CD14-positive monocyte (primary cell): ENCODE measurements at regions of chr11 and their contacts with region 1.

Region 1: DNA sequence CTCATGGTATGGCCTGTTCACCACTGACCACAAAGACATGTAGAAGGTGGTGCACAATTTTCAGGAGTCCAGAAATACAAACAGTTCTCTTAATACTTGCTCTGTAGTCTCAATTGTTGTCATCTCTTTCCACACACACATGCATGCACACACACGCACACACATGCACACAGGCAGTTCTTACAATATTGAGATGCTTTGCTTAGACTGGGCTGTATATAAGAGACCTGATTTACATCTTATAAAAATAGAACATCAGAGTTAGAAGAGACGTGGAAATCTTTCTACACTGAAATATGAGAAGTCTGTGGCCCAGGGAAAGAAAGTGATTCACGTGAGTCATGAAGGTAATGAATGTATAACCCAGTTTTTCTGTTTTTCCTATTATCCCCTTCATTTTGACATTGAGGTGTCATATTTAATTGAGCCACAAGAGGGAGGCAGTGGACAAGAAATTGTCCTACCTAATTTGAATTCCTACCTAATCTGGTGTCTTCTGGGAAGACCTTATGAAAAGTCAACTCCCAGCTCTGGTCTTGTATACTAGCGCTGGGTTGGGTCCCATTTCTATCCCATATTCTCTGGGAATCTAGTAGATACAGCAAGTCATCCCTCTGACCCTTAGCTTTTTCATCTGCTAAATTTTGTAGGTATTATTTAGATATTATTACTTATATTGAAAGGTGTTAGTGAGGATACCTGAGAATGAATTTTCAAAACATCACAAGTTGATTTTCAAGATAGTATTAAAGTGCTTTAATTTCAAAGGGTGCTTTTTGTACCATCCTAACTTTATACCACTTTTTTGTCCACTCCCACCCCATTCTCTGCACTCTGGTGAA is 14.9 kb upstream of the MS4A4A start:
- DNase-seq: peak in 2 of 3 donors; percentile 59 to 64
- H3K4me3 ChIP-seq: no peak overlapping the region
- H3K4me3 Mint-ChIP-seq: no peak overlapping the region
- H3K27ac ChIP-seq: no peak overlapping the region
- H3K27ac Mint-ChIP-seq: peak overlapping the region in 1 of 7 donors; percentile 43
- H3K4me1 ChIP-seq: peaks cover 17 to 20% of the 10 kb centered on the region in 2 donors
- H3K4me1 Mint-ChIP-seq: peaks cover 24% of the 10 kb centered on the region
- H3K27me3 ChIP-seq: no peaks in the 10 kb centered on the region
- H3K27me3 Mint-ChIP-seq: no peaks in the 10 kb centered on the region
- CTCF ChIP-seq: peak; percentile 91

Region 2: DNA sequence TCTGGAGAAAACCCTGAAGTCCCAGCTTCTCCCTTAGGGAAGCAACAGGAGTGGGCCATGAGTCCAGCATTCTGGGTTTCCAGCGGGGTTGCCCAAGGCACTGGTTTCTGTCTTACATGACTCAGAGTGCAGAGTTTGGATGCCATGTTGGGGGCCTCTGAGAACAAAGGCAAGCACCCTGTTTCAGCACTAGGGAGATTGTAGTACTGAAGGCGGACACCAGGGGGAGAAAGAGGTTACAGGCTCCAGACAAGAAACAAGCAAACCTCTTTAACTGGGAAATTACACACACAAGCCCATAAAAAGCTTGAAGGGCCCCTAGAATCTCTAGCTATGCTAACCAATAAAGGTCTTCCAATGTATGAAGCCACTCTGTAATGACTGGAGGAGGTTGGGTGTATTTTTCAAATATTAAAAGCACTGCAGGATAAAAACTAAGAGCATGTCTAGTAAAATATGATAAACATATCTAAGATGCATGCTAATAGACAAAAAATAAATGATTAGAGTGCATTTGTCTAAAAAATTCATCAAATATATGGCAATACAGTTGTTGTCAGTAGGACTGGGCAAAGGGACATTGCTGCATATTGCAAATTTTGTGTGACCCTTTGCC is 68.5 kb after region 1 on chr11:
- intact Hi-C with region 1: loop called in 1 of 2 experiments (anchors 5 kb)
- DNase-seq: peak; percentile 74 to 87 (median 75)
- H3K4me3 ChIP-seq: no peak overlapping the region
- H3K4me3 Mint-ChIP-seq: no peak overlapping the region
- H3K27ac ChIP-seq: peak overlapping the region in 1 of 2 donors; percentile 7
- H3K27ac Mint-ChIP-seq: peak overlapping the region in 2 of 7 donors; percentile 15 to 22
- H3K4me1 ChIP-seq: peaks cover 34 to 40% of the 10 kb centered on the region in 2 donors
- H3K4me1 Mint-ChIP-seq: peaks cover 33% of the 10 kb centered on the region
- H3K27me3 ChIP-seq: no peaks in the 10 kb centered on the region
- H3K27me3 Mint-ChIP-seq: peaks cover 0 to 3% (median 0%) of the 10 kb centered on the region in 3 donors
- CTCF ChIP-seq: peak; percentile 91

Region 3: DNA sequence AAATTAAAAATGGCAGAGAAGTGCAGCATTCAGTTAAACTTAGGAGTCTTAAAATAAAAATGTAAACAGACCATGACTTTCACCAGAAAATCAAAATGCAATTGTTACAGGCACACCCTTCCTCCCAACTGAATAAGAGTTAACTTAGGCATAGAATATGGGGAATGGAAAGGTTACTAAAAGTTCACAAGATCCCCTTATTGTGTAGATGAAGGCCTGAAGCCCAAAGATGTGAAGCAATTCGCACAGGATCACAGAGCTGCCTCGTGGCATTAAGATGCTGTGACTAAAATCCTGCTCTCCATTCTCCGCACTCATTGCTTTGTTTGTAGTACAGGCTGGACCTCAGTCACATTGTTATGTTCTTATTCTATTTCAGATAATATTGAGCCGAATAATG is 167.8 kb after region 1 on chr11:
- intact Hi-C with region 1: no loop called
- DNase-seq: no peak
- H3K4me3 ChIP-seq: no peak overlapping the region
- H3K4me3 Mint-ChIP-seq: no peak overlapping the region
- H3K27ac ChIP-seq: no peak overlapping the region
- H3K27ac Mint-ChIP-seq: no peak overlapping the region
- H3K4me1 ChIP-seq: no peaks in the 10 kb centered on the region
- H3K4me1 Mint-ChIP-seq: peaks cover 13% of the 10 kb centered on the region
- H3K27me3 ChIP-seq: peaks cover 0 to 2% of the 10 kb centered on the region in 2 donors
- H3K27me3 Mint-ChIP-seq: peaks cover 0 to 4% (median 0%) of the 10 kb centered on the region in 3 donors
- CTCF ChIP-seq: no peak

Region 4: GRCh38 chr11:60485986-60486385 is 220.4 kb after region 1 on chr11:
- intact Hi-C with region 1: loop called (anchors 10 kb)
- DNase-seq: peak; percentile 32 to 65 (median 55)
- H3K4me3 ChIP-seq: no peak overlapping the region
- H3K4me3 Mint-ChIP-seq: no peak overlapping the region
- H3K27ac ChIP-seq: no peak overlapping the region
- H3K27ac Mint-ChIP-seq: peak overlapping the region in 1 of 7 donors; percentile 54
- H3K4me1 ChIP-seq: peaks cover 21 to 26% of the 10 kb centered on the region in 2 donors
- H3K4me1 Mint-ChIP-seq: peaks cover 28% of the 10 kb centered on the region
- H3K27me3 ChIP-seq: no peaks in the 10 kb centered on the region
- H3K27me3 Mint-ChIP-seq: no peaks in the 10 kb centered on the region
- CTCF ChIP-seq: peak; percentile 80

Region 5: DNA sequence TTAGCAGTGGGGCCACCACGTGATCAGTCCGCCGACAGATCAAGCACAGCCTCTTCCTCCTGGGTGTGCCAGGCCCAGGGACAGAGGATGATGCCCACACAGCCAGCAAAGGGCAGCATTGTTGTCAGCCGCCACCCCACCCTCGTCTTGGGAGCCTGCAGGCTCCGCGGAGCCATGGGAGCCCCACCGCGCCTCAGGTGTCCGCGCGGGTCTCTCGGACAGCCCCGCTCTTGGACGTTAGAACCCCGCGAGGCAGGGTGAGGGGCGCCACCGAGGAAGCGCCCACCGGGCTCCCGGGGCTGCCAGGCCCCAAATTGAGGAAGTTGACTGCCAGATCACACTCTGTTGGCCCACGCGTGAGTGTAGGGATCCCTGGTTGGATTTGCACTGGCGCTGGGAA is 349.9 kb after region 1 on chr11:
- intact Hi-C with region 1: loop called in 1 of 2 experiments (anchors 5 kb)
- DNase-seq: no peak
- H3K4me3 ChIP-seq: no peak overlapping the region
- H3K4me3 Mint-ChIP-seq: no peak overlapping the region
- H3K27ac ChIP-seq: no peak overlapping the region
- H3K27ac Mint-ChIP-seq: no peak overlapping the region
- H3K4me1 ChIP-seq: peaks cover 0 to 4% of the 10 kb centered on the region in 2 donors
- H3K4me1 Mint-ChIP-seq: peaks cover 6% of the 10 kb centered on the region
- H3K27me3 ChIP-seq: no peaks in the 10 kb centered on the region
- H3K27me3 Mint-ChIP-seq: peaks cover 0 to 8% (median under 1%) of the 10 kb centered on the region in 3 donors
- CTCF ChIP-seq: no peak